Activated CD4-positive, alpha-beta T cell treated with anti-CD3 and anti-CD28 coated beads for 36 hours (primary cell): ENCODE measurements at regions of chr22 and their contacts with region 1.

Region 1: DNA sequence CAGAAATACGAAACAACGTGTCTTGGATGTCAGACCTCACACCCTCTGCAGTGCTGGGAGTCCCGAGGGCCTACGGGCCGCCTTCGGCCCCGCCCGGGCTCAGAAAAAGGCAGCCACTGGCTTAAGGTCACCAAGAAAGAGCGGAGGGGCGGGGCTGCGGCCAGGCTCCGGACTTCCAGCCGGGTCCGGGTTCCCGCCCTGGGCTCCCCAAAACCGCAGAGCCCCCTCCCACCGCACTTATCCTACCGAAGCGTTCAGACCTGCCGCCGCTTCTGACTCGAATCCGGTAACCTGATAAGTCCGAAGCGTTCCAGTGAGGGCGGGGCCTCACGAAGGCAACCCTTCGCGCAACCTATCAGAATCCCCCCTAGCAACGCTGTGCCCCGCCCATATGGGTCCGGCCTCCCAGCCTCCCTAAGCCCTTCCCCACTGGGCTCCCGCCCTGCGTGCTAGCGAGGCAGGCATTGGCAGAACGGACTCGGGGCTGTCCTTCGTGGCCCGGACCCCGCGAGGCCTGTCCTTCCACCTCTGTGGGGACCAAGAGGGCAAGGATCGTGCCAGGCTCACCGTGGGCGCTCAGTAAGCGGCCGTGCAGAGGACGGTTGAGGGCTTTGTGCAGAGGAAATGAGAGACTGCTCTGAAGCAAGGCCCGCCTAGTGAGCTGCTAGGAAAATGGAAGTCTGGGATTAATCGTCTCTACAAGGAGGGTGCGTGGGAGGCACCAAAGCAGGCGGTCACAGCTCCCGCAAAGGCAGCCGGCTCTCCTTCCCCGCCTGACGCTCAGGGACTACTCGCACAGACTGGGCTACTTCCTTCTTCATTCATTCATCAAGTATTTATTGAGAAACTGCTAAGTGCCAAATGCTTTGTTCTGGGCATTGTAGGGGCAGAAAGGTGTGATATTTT is at the start of gene NAGA:
- DNase-seq: peak; percentile 97
- ATAC-seq: peak; percentile 99
- H3K4me3 Mint-ChIP-seq: peak within 1 kb of the TSS; percentile 84
- H3K27ac Mint-ChIP-seq: peak within 1 kb of the TSS; percentile 89
- H3K4me1 Mint-ChIP-seq: peaks cover 28% of the 10 kb centered on the region
- H3K27me3 Mint-ChIP-seq: no peaks in the 10 kb centered on the region
- total RNA-seq, gene NAGA: 19.7 to 20.0 TPM

Region 2: DNA sequence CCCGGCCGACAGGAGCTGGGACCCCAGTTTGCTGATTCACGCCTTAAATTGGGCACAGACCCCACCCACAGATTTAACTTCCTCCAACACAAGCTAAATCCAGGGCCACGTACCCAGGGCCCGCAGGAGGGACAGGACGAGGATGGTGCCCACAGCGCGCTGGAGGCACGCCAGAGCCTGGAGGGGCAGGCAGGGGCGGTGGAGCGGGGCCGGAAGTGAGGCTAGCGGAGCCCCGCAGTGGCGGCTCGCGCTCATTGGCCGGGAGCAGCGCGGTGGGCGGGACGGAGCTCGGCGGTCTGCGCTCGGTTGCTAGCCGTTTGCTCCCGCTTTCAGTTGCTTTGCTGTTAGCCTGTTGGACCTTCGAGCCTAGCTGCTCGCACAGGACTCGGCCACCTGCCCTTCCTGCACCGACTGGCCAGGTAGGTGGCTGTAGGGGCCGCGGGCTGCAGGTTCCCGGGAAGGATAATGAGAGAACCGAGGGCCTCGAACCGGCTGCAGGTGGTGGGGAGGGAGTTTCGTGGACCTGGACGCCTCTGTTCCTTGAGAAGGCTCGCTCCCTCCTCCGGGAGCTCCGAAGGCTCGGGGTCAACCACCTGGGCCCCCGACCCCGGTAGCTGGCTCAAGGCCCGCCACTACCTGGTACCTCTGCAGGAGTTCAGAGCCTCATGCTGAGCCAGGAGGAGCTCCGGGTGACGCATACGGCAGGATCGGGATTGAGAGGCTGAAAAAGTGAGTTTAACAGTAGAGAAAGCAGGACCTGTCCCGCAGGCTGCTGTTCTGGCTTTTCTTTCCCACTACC is 270.2 kb before region 1 on chr22 and contains the start of gene CCDC134:
- CTCF ChIA-PET with region 1: no interaction called
- POLR2A ChIA-PET with region 1: no interaction called
- intact Hi-C with region 1: loop called in 1 of 2 experiments (anchors 1 kb)
- DNase-seq: peak; percentile 95
- ATAC-seq: peak; percentile 98
- H3K4me3 Mint-ChIP-seq: peak within 1 kb of the TSS; percentile 91
- H3K27ac Mint-ChIP-seq: peak within 1 kb of the TSS; percentile 96
- H3K4me1 Mint-ChIP-seq: peaks cover 38% of the 10 kb centered on the region
- H3K27me3 Mint-ChIP-seq: no peaks in the 10 kb centered on the region
- total RNA-seq, gene CCDC134: 14.7 to 15.2 TPM

Region 3: DNA sequence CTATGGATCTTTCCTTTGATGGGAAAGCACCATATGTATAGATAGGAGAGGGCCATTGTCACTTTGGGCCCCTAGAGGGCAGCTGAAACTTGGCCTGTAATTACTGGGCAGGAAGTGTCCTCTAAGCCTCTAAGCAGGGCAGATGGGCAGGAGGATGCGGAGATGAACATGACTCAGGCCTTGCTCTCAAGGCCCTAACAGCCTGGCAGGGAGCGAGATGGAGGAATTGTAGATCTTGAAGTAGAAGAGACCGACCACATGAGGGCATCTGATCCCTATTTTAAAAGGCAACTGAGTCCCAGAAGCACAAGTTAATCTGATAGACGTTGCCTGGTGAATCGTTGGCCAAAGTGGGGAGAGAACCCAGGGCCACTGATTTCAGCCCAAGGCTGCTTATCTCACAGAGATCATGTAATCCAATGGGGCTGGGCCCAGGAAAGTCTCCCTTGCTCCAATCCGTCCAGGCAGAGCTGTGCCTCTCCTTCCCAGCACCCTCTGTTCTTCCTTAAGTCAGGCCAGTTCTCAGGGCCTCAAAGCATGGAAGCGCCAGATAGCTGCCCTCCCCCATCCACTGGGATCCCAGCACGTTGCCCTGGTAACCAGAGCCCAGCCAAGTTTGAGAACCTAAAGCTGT is 104.0 kb before region 1 on chr22:
- CTCF ChIA-PET with region 1: no interaction called
- POLR2A ChIA-PET with region 1: no interaction called
- intact Hi-C with region 1: loop called in 1 of 2 experiments (anchors 5 kb)
- DNase-seq: peak; percentile 66
- ATAC-seq: peak; percentile 86
- H3K4me3 Mint-ChIP-seq: no peak overlapping the region
- H3K27ac Mint-ChIP-seq: peak overlapping the region; percentile 42
- H3K4me1 Mint-ChIP-seq: peaks cover 5% of the 10 kb centered on the region
- H3K27me3 Mint-ChIP-seq: no peaks in the 10 kb centered on the region

Region 4: DNA sequence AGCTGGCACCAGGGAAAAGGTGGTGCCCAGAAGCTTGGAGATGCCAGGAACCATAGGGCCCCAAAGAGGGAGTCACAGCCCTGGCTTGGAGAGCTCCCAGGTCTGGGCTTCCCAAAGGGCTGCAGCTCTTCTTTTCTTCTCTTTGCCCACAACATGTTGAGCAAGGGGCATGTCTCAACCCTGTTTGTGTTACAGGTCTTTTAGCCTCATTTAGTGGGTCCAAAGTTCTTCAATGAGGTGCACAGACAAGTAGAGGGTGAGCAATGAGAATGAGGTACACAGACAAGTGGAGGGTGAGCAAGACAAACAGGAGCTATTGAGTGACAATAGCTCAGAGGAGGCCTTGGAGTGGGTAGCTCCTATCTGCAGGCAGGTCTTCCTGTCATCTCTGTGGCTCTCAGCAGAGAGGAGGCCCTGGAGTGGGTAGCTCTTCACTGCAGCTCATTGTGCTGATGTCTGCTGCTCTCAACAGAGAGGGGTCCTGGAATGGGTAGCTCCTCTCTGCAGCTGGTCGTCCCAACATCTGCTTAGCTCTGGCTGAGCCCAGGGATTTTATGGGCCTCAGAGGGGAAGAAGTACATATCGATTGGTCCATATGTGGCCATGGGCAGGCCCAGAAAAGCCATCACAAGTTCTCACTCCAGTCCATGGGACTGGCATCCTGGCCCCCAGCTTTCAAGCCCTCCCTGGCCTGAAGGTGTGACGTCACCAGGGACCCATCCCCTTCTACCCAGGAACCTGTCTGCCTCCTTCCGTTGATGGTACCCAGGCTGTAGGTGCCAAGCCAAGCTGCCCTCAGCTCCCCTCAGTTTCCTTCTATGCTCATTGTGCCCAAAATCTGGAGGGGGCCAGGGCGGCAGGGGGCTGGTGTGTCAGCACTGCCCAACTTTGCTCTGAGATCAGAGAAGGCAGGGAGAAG is 37.2 kb before region 1 on chr22:
- CTCF ChIA-PET with region 1: no interaction called
- POLR2A ChIA-PET with region 1: interaction called, 4 read pairs
- intact Hi-C with region 1: loop called in 1 of 2 experiments (anchors 2 kb)
- DNase-seq: peak; percentile 29
- ATAC-seq: no peak
- H3K4me3 Mint-ChIP-seq: no peak overlapping the region
- H3K27ac Mint-ChIP-seq: no peak overlapping the region
- H3K4me1 Mint-ChIP-seq: peaks cover 19% of the 10 kb centered on the region
- H3K27me3 Mint-ChIP-seq: no peaks in the 10 kb centered on the region

Region 5: GRCh38 chr22:42369245-42370041 is 298.7 kb after region 1 on chr22:
- CTCF ChIA-PET with region 1: no interaction called
- POLR2A ChIA-PET with region 1: no interaction called
- intact Hi-C with region 1: loop called in 1 of 2 experiments (anchors 1 kb)
- DNase-seq: peak; percentile 91
- ATAC-seq: peak; percentile 99
- H3K4me3 Mint-ChIP-seq: peak overlapping the region; percentile 82
- H3K27ac Mint-ChIP-seq: peak overlapping the region; percentile 53
- H3K4me1 Mint-ChIP-seq: peaks cover 17% of the 10 kb centered on the region
- H3K27me3 Mint-ChIP-seq: peaks cover 27% of the 10 kb centered on the region

Region 6: GRCh38 chr22:42399315-42400271 is 328.8 kb after region 1 on chr22:
- CTCF ChIA-PET with region 1: no interaction called
- POLR2A ChIA-PET with region 1: no interaction called
- intact Hi-C with region 1: no loop called
- DNase-seq: no peak
- ATAC-seq: no peak
- H3K4me3 Mint-ChIP-seq: no peak overlapping the region
- H3K27ac Mint-ChIP-seq: no peak overlapping the region
- H3K4me1 Mint-ChIP-seq: no peaks in the 10 kb centered on the region
- H3K27me3 Mint-ChIP-seq: no peaks in the 10 kb centered on the region